Ascending aorta (tissue), 2 donors: ENCODE measurements at regions of chr1 and their contacts with region 1.

Region 1: GRCh38 chr1:43171876-43172526 is at the starts of genes CFAP57 and EBNA1BP2:
- DNase-seq: peak; percentile 76 to 96
- H3K4me3 ChIP-seq: peak within 1 kb of the TSS; percentile 69 to 92
- H3K27ac ChIP-seq: peak within 1 kb of the TSS; percentile 46 to 51
- H3K4me1 ChIP-seq: peaks cover 6 to 9% of the 10 kb centered on the region in 2 donors
- H3K27me3 ChIP-seq: no peaks in the 10 kb centered on the region
- CTCF ChIP-seq: no peak
- total RNA-seq, gene CFAP57: not detected
- total RNA-seq, gene EBNA1BP2: 22.1 TPM

Region 2: GRCh38 chr1:42924082-42924850 is 247.7 kb before region 1 on chr1:
- intact Hi-C with region 1: loop called (anchors 2 kb)
- DNase-seq: peak; percentile 85 to 97
- H3K4me3 ChIP-seq: peak overlapping the region; percentile 81 to 89
- H3K27ac ChIP-seq: peak overlapping the region; percentile 97 to 98
- H3K4me1 ChIP-seq: peaks cover 3 to 9% of the 10 kb centered on the region in 2 donors
- H3K27me3 ChIP-seq: no peaks in the 10 kb centered on the region
- CTCF ChIP-seq: no peak

Region 3: DNA sequence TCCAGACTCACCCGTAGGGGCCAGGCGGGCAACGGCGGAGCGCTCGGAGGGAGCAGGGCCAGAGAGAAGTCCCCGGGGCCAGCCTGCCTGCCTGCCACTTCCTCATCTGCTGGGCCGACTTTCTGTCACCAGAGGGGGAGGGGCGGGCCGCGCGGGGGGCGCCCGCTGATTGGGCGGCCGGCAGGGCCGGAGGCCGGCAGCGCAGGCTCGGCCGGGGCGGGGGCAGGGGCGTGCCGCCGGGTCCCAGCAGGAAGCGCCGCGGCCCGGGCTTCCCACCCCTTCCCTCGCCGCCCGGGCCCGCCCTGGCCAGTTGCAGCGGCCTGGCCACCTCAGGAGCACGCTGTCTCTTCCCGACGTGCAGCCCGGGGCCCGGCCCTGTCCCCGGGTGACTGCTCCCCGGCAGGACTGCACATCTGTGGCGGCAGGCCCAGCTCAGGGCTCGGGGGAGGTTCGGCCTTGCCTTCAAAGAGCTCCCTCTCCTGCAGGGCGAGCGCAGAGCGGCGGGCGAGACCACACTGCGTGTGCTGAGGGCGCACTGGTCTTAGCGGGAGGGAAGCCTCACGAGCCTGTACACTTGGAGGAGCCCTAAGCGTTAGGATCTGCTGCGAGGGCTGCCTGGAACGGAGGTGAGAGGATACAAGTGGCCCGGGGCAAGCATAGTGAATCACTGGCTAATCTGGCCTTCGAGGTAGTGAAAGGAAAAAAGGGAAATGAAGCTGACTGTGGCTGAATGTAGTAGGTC is 196.1 kb after region 1 on chr1 and contains the start of gene ELOVL1:
- intact Hi-C with region 1: loop called (anchors 1 kb)
- DNase-seq: peak; percentile 70 to 96
- H3K4me3 ChIP-seq: peak within 1 kb of the TSS; percentile 96 to 97
- H3K27ac ChIP-seq: peak within 1 kb of the TSS; percentile 96
- H3K4me1 ChIP-seq: peaks cover 12 to 22% of the 10 kb centered on the region in 2 donors
- H3K27me3 ChIP-seq: no peaks in the 10 kb centered on the region
- CTCF ChIP-seq: peak in 2 of 3 experiments; percentile 11 to 26
- total RNA-seq, gene ELOVL1: 39.9 TPM